ENCODE measurements at regions of chr5 and their contacts with region 1.

Region 1: DNA sequence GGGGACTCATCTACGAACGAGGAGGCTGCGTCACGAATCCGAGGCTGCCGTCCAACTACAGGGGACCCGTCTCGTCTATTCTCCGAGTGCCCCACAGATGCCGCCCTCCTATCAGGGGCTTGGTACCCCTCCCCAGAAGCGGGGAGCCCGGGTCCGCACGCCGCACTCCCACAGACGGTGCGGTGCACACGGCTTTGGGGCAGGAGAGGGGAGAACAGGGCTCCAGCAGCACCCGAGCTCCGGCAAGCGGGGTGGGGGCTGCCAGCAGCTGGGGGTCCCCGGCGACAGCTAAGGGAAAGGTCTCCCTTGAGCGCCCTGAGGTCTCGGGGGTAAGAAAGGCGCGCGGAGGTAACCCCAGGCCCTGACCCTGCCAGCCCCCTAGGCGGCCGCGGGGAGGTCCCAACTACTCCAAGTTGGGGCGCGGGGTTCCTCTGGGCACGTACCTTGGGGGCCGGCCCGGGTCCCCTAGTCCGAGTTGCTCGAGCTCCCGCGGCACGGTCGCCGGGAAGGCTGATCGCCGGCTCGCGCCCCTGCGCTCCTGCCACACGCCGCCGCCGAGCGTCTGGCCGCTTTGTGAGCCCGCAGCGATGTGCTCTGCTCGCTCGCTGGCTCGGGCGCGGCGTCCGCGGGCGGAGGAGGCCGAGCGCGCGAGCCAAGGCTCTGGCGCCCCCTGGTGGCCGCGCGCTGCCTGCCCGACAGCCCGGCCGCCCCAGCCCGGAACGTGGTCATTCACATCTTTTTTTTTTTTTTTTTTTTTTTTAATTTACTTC is at the start of gene SPOCK1:
- DNase-seq: peak; percentile 76
- ATAC-seq: peak; percentile 91
- H3K4me3 ChIP-seq: peak within 1 kb of the TSS; percentile 71
- H3K27ac ChIP-seq: no peak within 1 kb of the TSS
- H3K4me1 ChIP-seq: no peaks in the 10 kb centered on the region
- H3K27me3 ChIP-seq: no peaks in the 10 kb centered on the region
- CTCF ChIP-seq: peak; percentile 36; the same call in 1 of the 2 replicates
- total RNA-seq, gene SPOCK1: 8.2 and 9.8 TPM in 2 replicates

Region 2: GRCh38 chr5:136802383-136802782 is 696.5 kb before region 1 on chr5:
- CTCF ChIA-PET with region 1: no interaction called
- POLR2A ChIA-PET with region 1: no interaction called
- intact Hi-C with region 1: loop called (anchors 1 kb)
- DNase-seq: peak; percentile 56
- ATAC-seq: no peak
- H3K4me3 ChIP-seq: no peak overlapping the region
- H3K27ac ChIP-seq: no peak overlapping the region
- H3K4me1 ChIP-seq: peaks cover 8% of the 10 kb centered on the region; the same call in 1 of the 2 replicates
- H3K27me3 ChIP-seq: no peaks in the 10 kb centered on the region
- CTCF ChIP-seq: peak; percentile 66

Region 3: GRCh38 chr5:137075163-137075970 is 423.6 kb before region 1 on chr5:
- CTCF ChIA-PET with region 1: interaction called, 4 read pairs
- POLR2A ChIA-PET with region 1: no interaction called
- intact Hi-C with region 1: loop called (anchors 10 kb)
- DNase-seq: peak; percentile 84
- ATAC-seq: peak; percentile 73
- H3K4me3 ChIP-seq: no peak overlapping the region
- H3K27ac ChIP-seq: no peak overlapping the region
- H3K4me1 ChIP-seq: peaks cover 39% of the 10 kb centered on the region
- H3K27me3 ChIP-seq: no peaks in the 10 kb centered on the region
- CTCF ChIP-seq: peak; percentile 79

Region 4: DNA sequence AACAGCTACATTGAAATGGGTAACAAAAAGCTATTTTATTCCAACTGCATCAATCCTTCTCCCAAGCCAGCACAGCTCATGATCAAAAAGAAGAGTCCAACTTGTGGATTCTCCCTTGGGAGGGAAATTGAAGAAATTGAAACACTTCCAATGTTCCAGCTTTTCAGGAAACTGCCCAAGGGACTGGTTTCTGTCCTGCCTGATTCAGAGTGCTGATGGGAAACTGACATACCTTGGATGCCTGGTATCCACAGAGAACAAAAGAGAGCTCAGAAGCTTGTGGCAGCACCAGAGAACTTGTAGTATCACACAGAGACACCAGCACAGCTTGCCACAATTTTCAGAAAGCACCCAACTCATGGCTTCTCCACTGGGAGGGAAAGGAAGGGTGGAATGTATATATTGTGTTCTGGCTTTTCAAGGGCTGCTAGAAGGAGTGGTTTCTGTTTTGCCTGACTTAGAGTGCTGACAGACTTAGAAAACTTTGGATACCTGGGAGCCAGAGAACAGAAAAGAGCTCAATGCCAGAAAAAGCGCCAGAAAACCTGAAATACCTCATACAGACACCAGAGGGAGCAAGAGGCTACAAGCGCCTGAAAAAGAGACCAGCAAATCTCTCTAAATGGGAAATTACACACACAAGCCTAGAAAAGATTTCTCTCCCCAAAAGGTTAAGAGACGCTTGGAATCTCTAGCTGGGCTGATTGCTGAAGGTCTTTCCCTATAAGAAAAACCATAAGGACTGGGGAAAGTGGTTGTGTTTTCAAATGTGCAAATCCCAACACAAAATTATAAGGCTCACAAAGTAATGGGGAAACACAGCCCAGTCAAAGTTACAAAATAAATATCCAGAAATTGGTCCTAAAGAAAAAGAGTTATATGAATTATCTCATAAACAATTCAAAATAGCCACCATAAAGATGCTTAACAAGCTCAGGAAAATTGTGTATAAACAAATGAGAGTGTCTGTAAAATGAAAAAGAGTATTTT is 178.6 kb before region 1 on chr5:
- CTCF ChIA-PET with region 1: interaction called, 11 read pairs
- POLR2A ChIA-PET with region 1: no interaction called
- intact Hi-C with region 1: loop called (anchors 1 kb)
- DNase-seq: peak; percentile 69
- ATAC-seq: 0 out of 2 replicates have a peak, but pooled peaks have one; percentile 24
- H3K4me3 ChIP-seq: no peak overlapping the region
- H3K27ac ChIP-seq: no peak overlapping the region
- H3K4me1 ChIP-seq: peaks cover 8% of the 10 kb centered on the region
- H3K27me3 ChIP-seq: no peaks in the 10 kb centered on the region
- CTCF ChIP-seq: peak; percentile 71

Region 5: DNA sequence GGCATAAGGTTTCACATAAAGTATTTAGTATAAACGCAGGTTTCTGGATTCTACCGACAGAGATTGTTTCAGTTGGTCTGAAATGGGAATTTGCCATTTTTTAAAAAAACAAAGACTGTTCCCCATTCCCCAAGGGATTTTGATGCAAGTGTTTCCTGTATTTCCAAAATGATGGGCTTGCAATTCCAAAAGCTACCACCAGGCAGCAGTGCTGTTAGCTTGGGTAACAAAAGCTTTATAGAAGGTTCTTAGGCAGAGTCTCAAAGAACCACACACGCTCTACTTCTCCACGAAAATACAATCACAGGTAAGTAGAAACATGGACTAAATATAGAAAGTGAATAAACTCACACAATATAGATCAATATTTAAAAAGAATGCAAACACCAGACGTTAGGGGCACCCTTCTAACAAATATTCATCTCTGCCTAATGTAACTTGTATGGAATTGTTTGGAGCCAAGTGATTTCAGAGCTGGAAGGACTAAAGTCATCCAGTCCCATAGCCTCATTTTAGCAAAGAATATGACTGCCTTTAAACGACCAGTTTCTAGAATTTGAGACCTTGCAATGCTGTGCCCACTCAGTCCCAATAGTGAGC is 154.1 kb before region 1 on chr5:
- CTCF ChIA-PET with region 1: no interaction called
- POLR2A ChIA-PET with region 1: interaction called, 3 read pairs
- intact Hi-C with region 1: loop called (anchors 1 kb)
- DNase-seq: peak; percentile 76
- ATAC-seq: no peak
- H3K4me3 ChIP-seq: no peak overlapping the region
- H3K27ac ChIP-seq: no peak overlapping the region
- H3K4me1 ChIP-seq: peaks cover 8% of the 10 kb centered on the region
- H3K27me3 ChIP-seq: no peaks in the 10 kb centered on the region
- CTCF ChIP-seq: peak; percentile 85

Region 6: DNA sequence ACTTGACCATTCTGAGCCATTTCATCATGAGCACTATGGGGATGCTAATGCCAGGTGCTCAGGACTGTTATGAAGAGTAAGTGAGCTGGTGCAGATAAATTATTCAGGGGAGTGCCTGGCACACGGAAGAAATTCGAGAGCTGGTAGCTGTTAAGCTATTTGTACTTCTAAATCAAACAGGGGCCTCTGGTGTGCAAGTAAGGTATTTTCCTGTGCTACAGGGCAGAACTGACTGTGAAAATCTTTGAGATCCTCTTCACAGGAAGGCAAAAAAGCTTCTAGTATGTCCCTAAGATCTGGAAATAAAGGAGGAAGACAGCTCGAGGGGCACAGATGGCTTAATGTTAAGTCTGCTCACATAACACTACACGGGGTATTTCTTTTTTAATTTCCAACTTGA is 106.5 kb after region 1 on chr5:
- CTCF ChIA-PET with region 1: no interaction called
- POLR2A ChIA-PET with region 1: no interaction called
- intact Hi-C with region 1: loop called (anchors 10 kb)
- DNase-seq: peak; percentile 37
- ATAC-seq: peak; percentile 77
- H3K4me3 ChIP-seq: no peak overlapping the region
- H3K27ac ChIP-seq: no peak overlapping the region
- H3K4me1 ChIP-seq: 0 out of 2 replicates have a peak, but pooled peaks cover 5% of the 10 kb centered on the region
- H3K27me3 ChIP-seq: peaks cover 4% of the 10 kb centered on the region; the same call in 1 of the 2 replicates
- CTCF ChIP-seq: peak; percentile 44; the same call in 1 of the 2 replicates